ENCODE measurements at regions of chr1 and their contacts with region 1.

Region 1: DNA sequence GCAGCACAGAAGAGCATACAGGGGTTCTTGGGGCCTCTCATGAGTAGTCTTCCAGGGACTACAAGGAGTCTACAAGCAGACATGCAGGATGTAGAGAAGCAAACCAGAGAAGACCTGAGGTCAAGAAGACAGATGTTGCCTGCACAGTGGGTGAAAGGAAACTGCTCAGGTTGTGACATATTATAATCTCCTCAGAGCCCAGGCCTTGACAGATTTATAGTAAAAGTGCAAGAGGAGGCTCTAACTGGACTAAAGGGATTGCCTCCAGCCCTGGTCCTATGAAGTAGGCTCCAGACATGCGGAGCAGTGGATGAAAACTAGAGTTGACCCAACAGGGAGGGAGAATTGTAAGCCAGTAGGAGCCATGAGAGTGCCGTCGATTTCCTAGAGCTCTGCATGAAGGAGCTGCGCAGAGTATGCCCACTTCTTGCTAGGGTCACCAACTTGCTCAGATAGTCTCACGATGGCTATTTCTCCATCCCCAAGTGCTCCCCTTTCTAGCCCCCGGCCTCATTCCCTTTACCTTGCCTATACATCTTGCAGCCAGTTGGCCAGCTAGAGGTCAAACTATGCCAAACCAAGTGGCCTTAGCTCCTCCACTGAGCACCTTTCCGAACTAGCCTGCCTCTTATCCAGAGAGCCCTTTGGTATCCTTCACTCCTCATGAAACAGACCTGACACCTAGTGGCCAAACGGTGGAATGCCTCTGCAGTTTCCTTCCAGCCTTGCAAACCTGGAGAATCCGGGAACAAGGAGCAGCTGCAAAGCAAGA is 36.2 kb upstream of the IPO9 start:
- DNase-seq: peak; percentile 91
- H3K4me3 ChIP-seq: no peak overlapping the region
- H3K27ac ChIP-seq: peak overlapping the region; percentile 78
- H3K4me1 ChIP-seq: peaks cover 40% of the 10 kb centered on the region
- H3K27me3 ChIP-seq: no peaks in the 10 kb centered on the region
- CTCF ChIP-seq: peak; percentile 98

Region 2: DNA sequence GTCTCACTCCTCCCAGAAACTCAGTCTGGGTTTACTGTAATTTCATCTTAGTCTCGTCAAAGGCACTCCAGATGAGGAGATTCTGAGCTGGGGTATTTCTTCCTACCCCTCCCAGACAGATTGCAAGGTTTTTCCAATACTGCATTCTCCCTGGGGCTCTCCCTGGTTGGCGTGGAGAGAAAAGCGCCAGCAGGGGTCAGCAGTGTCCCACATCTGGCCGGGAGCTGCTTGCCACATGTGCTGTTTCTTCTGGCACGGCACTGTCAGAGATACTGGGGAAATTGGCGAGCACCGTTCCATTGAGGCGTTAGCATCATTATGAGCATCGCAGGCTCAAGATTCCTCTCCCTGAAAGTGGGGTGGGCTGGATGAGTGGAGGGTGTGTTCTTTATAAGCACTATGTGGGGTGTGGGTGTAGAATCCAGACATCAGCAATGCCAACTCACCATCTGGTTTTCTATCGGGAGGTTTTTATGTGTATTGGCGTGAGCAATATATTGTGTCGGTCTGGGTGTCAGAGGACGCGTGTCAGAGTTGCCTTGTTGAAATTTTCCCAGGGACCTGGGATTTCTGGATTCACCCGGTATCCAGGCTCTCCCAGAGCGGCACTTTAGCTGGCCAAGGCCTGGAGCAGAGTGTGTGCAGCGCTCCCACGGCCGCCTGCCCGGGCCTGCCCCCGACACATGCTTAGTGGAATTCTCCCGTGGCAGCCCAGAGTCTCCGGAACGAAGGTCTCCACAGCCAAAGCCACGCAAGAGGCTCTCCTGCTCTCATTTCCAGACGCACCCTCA is 261.8 kb before region 1 on chr1:
- CTCF ChIA-PET with region 1: interaction called, 11 read pairs
- POLR2A ChIA-PET with region 1: no interaction called
- intact Hi-C with region 1: loop called (anchors 1 kb)
- DNase-seq: peak; percentile 91
- H3K4me3 ChIP-seq: no peak overlapping the region
- H3K27ac ChIP-seq: no peak overlapping the region
- H3K4me1 ChIP-seq: peaks cover 33% of the 10 kb centered on the region
- H3K27me3 ChIP-seq: no peaks in the 10 kb centered on the region
- CTCF ChIP-seq: peak; percentile 94

Region 3: GRCh38 chr1:201649761-201650622 is 142.7 kb before region 1 on chr1:
- CTCF ChIA-PET with region 1: no interaction called
- POLR2A ChIA-PET with region 1: no interaction called
- intact Hi-C with region 1: loop called (anchors 1 kb)
- DNase-seq: peak; percentile 89
- H3K4me3 ChIP-seq: peak overlapping the region; percentile 60
- H3K27ac ChIP-seq: peak overlapping the region; percentile 12
- H3K4me1 ChIP-seq: peaks cover 28% of the 10 kb centered on the region
- H3K27me3 ChIP-seq: no peaks in the 10 kb centered on the region
- CTCF ChIP-seq: no peak